HCT116 (cell line): ENCODE measurements at regions of chr11 and their contacts with region 1.

Region 1: DNA sequence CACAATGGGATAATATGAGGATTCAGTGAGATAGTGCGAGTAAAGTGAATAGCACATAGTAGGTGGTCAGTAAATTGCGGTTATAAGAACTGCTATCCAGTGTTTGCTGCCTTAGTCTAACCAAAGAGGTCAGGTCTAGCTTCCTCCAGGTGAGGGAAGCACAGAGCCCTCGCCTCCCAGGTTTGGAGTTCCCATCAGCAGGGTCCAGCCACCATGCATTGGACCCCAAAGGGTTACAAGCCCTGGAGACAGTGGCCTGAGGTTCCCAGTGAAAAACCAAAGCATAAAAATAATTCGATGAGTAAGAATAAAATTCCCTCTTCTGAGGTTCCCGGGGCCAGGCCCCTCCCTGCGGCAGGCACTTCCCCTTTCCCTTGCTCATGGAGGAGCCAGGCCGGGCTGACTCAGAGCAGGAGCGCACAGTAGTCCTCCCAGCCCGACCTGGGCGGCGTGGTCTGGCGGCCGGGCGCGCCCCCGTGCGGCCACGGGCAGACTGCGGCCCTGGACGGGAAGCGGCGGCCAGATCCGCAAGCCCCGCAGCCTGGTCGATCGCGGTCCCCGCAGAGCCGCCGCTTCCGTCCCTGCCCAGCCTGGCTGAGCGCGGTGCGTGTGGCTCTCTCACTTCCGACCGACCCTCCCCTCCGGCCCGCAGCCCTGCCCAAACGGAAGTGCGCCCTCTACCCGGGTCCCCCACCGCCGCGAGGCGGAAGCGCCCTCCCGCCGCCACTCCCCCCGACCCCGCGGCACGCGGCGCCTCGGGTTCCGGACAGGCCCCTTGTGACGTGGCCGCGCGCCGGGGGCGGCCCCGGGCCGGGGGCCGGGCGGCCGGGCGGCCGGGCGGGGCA is at the start of gene SLC39A13:
- DNase-seq: peak; percentile 81
- ATAC-seq: peak; percentile 88
- H3K4me3 ChIP-seq: peak within 1 kb of the TSS; percentile 78 to 87
- H3K27ac ChIP-seq: peak within 1 kb of the TSS; percentile 98
- H3K4me1 ChIP-seq: peaks cover 19 to 22% of the 10 kb centered on the region in 2 experiments
- H3K27me3 ChIP-seq: no peaks in the 10 kb centered on the region
- CTCF ChIP-seq: peak; percentile 50 to 75 (median 74); a peak in 5 of 6 replicates
- POLR2A ChIP-seq: peak; percentile 70
- RAD21 ChIP-seq: peak; percentile 67
- total RNA-seq, gene SLC39A13: 23.9 TPM

Region 2: DNA sequence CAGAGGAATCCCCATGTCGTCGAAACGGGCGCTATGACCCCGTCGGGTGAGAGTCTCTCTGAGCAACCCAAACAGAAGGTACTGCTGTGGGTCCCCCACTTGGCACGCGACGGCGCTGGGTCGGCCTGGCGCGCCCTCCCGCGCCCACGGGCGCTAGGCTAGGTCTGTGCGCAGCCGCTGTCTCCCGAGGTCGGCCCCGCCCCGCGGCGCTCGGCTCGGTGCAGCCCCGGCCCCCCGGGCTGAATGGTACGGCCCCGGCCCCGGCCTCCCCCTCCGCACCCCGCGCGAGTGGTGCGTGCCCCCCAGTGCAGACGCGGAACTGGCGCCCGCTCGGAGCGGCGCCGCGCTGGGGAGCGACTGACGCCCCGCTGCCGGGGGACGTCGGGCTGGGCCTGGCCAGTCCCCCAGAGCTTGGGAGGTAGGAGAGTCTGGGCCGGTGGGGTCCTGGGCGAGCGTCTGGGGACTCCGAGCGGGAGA is 138.1 kb before region 1 on chr11 and contains the start of gene MADD:
- CTCF ChIA-PET with region 1: no interaction called
- POLR2A ChIA-PET with region 1: no interaction called
- RAD21 ChIA-PET with region 1: no interaction called
- intact Hi-C with region 1: loop called (anchors 2 kb)
- DNase-seq: peak; percentile 55
- ATAC-seq: peak; percentile 88
- H3K4me3 ChIP-seq: peak within 1 kb of the TSS; percentile 59 to 76
- H3K27ac ChIP-seq: peak within 1 kb of the TSS; percentile 89
- H3K4me1 ChIP-seq: peaks cover 21 to 42% of the 10 kb centered on the region in 2 experiments
- H3K27me3 ChIP-seq: no peaks in the 10 kb centered on the region
- CTCF ChIP-seq: no peak
- POLR2A ChIP-seq: peak; percentile 52
- RAD21 ChIP-seq: no peak
- total RNA-seq, gene MADD: 37.1 TPM